GM12878 (cell line): ENCODE measurements at regions of chr3 and their contacts with region 1.

Region 1: DNA sequence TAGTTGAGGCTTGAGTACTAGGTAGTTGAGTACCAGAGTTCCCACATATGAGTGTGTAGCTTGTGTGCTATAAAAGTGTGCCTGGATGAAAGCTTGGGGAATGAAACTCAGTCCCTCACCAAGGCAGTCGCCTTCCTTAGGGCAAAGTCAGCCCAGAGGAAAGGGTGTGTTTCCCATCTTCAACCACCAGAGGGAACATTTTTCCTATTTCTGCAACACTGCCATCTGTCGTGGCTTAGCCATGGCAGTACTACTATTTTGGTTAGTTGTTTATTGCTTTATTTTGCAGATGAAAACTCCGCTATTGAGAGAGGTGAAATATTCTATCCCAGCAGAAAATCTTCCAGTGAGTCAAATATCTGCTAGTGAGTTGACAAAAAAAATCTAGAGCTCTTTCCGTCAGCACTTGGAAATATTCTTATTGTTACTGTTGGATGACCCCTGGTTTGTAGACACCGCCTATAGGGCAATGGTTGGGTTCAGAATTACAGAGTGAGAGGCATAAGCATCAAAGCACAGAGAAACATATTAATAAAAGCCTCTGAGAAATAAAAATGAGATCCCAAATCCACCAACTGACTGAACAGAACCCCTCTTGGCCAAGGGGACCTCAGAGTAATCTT is 239.9 kb downstream of the CPNE4 start:
- DNase-seq: no peak
- ATAC-seq: peak; percentile 80
- H3K4me3 ChIP-seq: no peak overlapping the region
- H3K27ac ChIP-seq: no peak overlapping the region
- H3K4me1 ChIP-seq: peaks cover 8% of the 10 kb centered on the region
- H3K27me3 ChIP-seq: no peaks in the 10 kb centered on the region
- CTCF ChIP-seq: peak; percentile 82 to 91 (median 83)
- EP300 ChIP-seq: no peak
- POLR2A ChIP-seq: no peak
- RAD21 ChIP-seq: peak; percentile 84

Region 2: GRCh38 chr3:131714585-131715220 is 80.2 kb before region 1 on chr3:
- CTCF ChIA-PET with region 1: interaction called, 24 read pairs
- POLR2A ChIA-PET with region 1: no interaction called
- RAD21 ChIA-PET with region 1: interaction called, 25 read pairs
- SMC1A ChIA-PET with region 1: interaction called, 14 read pairs
- in situ Hi-C with region 1: no loop called
- intact Hi-C with region 1: loop called (anchors 5 kb)
- DNase-seq: peak; percentile 71
- ATAC-seq: peak; percentile 73
- H3K4me3 ChIP-seq: no peak overlapping the region
- H3K27ac ChIP-seq: peak overlapping the region; percentile 23; the same call in 1 of the 2 replicates
- H3K4me1 ChIP-seq: peaks cover 47% of the 10 kb centered on the region
- H3K27me3 ChIP-seq: no peaks in the 10 kb centered on the region
- CTCF ChIP-seq: no peak
- EP300 ChIP-seq: peak in 1 of 2 experiments; percentile 76; a peak in 2 of 4 replicates
- POLR2A ChIP-seq: no peak
- RAD21 ChIP-seq: peak; percentile 20; the same call in 1 of the 2 replicates

Region 3: DNA sequence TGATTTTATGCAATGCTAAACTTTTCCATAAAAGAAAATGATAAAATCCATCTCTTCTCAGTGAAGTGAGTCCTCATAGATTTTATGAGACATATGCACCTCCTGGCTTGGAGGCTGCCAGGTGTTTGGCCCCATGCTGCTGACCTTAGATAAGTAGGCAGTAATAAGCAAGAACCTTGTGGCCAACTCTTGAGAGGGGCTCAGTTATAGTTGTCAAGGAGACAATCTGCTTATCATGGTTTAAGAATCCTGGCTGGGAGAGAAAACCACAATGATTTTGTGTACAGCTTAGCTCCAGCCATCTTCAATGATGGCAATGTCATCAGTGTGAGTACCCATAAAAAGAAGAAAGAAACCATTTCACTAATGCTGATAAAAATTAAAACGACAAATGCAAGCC is 12.1 kb before region 1 on chr3:
- CTCF ChIA-PET with region 1: interaction called, 17 read pairs
- POLR2A ChIA-PET with region 1: no interaction called
- RAD21 ChIA-PET with region 1: interaction called, 3 read pairs
- SMC1A ChIA-PET with region 1: interaction called, 9 read pairs
- in situ Hi-C with region 1: no loop called
- intact Hi-C with region 1: no loop called
- DNase-seq: no peak
- ATAC-seq: no peak
- H3K4me3 ChIP-seq: no peak overlapping the region
- H3K27ac ChIP-seq: no peak overlapping the region
- H3K4me1 ChIP-seq: no peaks in the 10 kb centered on the region
- H3K27me3 ChIP-seq: no peaks in the 10 kb centered on the region
- CTCF ChIP-seq: no peak
- EP300 ChIP-seq: no peak
- POLR2A ChIP-seq: no peak
- RAD21 ChIP-seq: no peak

Region 4: DNA sequence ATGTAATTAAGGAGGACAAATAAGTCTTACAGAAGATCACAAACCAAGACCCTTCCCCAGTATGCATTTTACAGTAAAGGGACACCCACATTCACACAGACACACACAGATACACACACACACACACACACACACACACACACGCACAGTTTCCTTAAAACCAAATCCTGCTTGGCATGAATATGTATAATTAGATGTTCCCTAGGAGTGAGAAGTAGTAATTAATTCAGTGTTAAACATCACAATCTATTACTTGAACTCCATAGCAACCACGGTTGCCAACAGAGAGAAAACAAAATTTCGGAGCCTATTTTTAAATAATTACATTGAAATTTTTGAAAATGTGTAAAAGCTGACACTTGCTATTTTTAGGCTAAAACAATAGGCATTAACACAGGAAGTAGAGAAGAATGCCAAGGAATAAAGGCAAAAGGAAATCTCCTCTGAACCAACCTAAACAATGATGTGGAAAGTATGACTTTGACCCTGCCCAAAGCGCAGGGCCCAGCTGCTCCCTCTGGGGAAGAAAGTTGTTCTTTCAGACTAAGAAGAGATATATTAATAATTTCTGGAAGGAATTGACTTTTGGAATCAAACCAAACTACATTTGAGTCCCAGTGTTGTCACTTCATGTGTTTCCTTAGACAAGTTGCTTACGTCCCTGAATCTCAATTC is 24.6 kb after region 1 on chr3:
- CTCF ChIA-PET with region 1: interaction called, 10 read pairs
- POLR2A ChIA-PET with region 1: no interaction called
- RAD21 ChIA-PET with region 1: no interaction called
- SMC1A ChIA-PET with region 1: interaction called, 18 read pairs
- in situ Hi-C with region 1: no loop called
- intact Hi-C with region 1: no loop called
- DNase-seq: no peak
- ATAC-seq: no peak
- H3K4me3 ChIP-seq: no peak overlapping the region
- H3K27ac ChIP-seq: no peak overlapping the region
- H3K4me1 ChIP-seq: no peaks in the 10 kb centered on the region
- H3K27me3 ChIP-seq: peaks cover 0 to 4% of the 10 kb centered on the region in 2 experiments; a peak in 1 of 4 replicates
- CTCF ChIP-seq: no peak
- EP300 ChIP-seq: no peak
- POLR2A ChIP-seq: no peak
- RAD21 ChIP-seq: no peak

Region 5: GRCh38 chr3:132029182-132029902 is 234.5 kb after region 1 on chr3:
- CTCF ChIA-PET with region 1: interaction called, 118 read pairs
- POLR2A ChIA-PET with region 1: no interaction called
- RAD21 ChIA-PET with region 1: interaction called, 47 read pairs
- SMC1A ChIA-PET with region 1: interaction called, 75 read pairs
- in situ Hi-C with region 1: loop called (anchors 5 kb)
- intact Hi-C with region 1: loop called (anchors 1 kb)
- DNase-seq: no peak
- ATAC-seq: peak; percentile 99
- H3K4me3 ChIP-seq: no peak overlapping the region
- H3K27ac ChIP-seq: no peak overlapping the region
- H3K4me1 ChIP-seq: no peaks in the 10 kb centered on the region
- H3K27me3 ChIP-seq: peaks cover 0 to 1% of the 10 kb centered on the region in 2 experiments; a peak in 1 of 4 replicates
- CTCF ChIP-seq: peak; percentile 89 to 92 (median 92); a peak in 5 of 6 replicates
- EP300 ChIP-seq: no peak
- POLR2A ChIP-seq: no peak
- RAD21 ChIP-seq: peak; percentile 94